ENCODE measurements at regions of chr11 and their contacts with region 1.

Region 1: GRCh38 chr11:118907051-118908042 is 18.4 kb downstream of the BCL9L start:
- DNase-seq: peak in 41 of 42 donors; percentile 78 to 96 (median 90)

Region 2: DNA sequence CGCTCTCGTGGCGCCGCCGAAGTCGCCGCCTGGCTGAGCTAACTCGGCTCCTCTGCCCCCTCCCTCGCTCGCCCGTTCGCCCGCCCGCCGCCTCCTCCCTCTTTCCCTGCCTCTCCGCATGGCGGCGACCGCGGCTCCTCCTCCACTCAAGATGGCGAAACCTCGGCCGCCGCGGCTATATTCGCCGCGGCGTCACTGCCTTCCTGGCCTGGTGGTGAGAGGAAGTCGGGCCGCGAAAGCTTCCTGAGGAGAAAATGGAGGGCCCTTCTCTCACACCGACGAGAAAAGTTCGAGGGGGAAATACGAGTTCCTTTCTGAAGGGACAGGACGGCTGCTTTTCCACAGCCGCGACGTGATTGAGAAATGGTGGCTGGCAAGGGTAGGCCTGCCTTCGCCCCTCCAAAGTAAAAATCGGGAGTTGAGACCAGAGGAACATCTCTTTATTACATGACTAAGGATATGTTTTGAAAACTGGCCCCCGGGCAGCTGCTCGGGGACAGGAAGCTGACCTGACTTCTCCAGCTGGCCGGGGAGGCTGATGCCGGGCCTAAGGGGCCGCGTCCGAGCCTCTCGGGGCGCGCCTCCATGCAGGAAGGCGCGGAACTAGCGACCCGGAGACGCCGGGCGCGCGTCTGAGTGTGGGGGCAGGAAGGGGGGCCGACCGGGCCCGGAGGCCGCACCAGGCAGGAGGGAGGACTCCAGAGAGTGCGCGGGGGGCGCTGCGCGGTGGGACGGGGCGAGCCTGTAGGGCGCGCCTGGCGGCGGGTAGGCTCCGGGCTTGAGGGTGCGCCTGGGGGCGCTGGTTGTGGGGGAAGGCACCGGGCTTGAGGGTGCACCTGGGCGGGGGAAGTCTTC is 116.0 kb before region 1 on chr11 and contains the start of gene DDX6:
- intact Hi-C with region 1: loop called (anchors 10 kb)
- DNase-seq: peak; percentile 73 to 98 (median 94)

Region 3: DNA sequence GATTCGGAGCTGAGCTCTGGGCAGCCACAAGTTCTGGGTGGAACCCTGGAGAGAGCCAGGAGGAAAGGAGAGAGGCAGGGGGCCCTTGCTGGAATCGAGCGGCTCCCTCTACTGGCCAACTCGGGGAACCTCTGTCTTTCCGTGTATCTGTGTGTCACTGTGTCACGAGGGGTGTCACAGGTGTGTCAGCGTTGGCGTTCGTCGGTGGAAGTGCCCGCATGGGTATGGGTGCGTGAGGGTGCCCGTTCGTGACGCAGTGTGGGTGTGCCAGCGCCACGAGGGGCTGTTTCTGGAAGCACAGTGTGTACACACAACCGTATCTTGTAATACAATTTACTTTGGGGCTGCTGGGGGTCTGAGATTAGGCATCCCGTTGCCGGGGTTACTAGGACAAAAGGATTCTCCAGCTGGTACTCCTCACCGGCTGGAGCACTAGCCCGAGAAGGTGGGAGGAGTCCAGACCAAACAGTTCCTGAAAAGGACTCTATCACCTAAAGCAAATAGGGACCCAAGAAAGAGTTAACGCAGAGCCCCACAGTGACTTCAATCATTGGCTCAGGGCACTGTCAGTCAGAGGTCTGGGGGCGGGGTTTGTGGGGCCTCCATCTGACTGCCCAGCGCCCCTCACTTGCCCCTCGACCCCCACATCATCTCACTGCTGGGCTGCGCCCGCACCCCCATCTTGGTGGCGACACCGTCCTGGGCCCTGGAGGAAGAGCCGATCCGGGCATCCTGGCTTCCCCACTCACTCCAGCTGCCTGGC is 20.9 kb after region 1 on chr11:
- intact Hi-C with region 1: loop called (anchors 2 kb)
- DNase-seq: peak; percentile 87 to 98 (median 94)

Region 4: GRCh38 chr11:118956094-118956846 is 48.9 kb after region 1 on chr11 and contains the start of gene UPK2:
- intact Hi-C with region 1: loop called (anchors 2 kb)
- DNase-seq: peak; percentile 87 to 97 (median 93)

Measured in head of caudate nucleus (tissue), 42 donors.